AG04449 (cell line): ENCODE measurements at regions of chr3 and their contacts with region 1.

Region 1: GRCh38 chr3:138426226-138426625 is 8.2 kb upstream of the ESYT3 start:
- DNase-seq: no peak
- H3K4me3 ChIP-seq: no peak overlapping the region
- CTCF ChIP-seq: peak; percentile 66

Region 2: GRCh38 chr3:138108099-138108498 is 318.1 kb before region 1 on chr3:
- CTCF ChIA-PET with region 1: no interaction called
- POLR2A ChIA-PET with region 1: no interaction called
- DNase-seq: no peak
- H3K4me3 ChIP-seq: no peak overlapping the region
- CTCF ChIP-seq: no peak

Region 3: DNA sequence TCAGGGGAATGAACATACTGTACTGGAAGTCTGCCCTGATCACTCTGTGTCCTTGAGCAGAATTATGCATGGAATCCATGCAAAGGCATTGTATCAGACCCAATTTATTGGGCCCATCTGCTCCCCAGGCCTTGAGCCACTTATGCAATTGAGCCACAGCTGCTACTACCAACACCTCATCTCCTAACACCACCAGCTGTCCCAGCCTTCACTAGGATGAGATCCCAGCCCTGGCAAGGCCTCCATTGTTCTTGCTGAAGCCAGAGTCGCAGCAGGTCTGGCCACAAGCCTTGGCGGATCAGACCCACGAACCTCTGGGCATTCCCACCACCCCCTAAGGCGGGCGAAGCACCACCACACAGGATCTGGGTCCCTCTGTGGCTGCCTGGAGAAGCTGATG is 87.4 kb before region 1 on chr3:
- CTCF ChIA-PET with region 1: interaction called, 12 read pairs
- POLR2A ChIA-PET with region 1: no interaction called
- DNase-seq: no peak
- H3K4me3 ChIP-seq: no peak overlapping the region
- CTCF ChIP-seq: no peak

Region 4: GRCh38 chr3:138812806-138813205 is 386.6 kb after region 1 on chr3:
- CTCF ChIA-PET with region 1: no interaction called
- POLR2A ChIA-PET with region 1: no interaction called
- DNase-seq: no peak
- H3K4me3 ChIP-seq: no peak overlapping the region
- CTCF ChIP-seq: no peak